ENCODE measurements at regions of chr7 and their contacts with region 1.

Region 1: DNA sequence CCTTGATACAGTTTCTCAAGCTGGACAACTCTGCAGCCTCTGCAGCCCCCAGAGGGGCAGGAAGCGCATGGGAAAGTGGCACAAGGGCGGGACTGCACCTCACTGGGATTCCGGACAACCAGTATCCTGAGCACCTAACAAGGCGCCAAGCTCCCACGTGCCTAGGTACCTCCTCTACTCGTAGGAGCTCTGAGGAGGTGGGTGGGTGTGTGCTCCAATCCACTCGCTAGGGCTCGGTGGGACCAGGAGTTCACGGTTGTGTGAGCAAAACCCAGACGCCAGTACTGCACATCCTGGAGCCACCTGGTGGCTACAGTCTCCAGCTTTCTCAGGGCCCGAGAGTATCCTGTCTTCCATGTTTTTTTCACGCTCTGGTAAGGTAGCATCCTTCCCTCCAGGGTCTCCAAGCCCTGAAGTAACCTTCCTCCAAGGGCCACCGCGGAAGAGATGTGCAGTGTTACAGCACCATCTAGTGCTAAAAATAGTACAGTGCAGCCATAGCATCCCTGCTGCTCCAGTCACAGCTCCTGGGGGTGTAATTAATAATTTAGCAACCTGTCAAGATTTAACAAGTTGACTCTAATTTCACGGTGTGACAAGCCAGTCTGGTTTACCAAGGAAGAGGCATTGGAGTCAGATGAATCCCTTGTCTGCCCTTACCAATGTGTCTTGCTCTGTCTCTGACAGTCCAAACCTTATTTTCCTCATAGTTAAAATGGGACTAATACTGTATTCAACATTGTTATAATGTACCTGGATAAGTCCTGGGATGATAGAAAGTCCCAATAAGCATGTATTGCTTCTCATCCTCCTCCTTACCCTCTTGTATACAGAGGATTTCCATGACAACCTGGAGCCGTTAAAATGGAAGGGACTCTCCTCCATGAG is 70.4 kb downstream of the HERPUD2 start:
- DNase-seq: peak; percentile 48
- ATAC-seq: peak; percentile 96
- H3K4me3 Mint-ChIP-seq: no peak overlapping the region
- H3K27ac Mint-ChIP-seq: no peak overlapping the region
- H3K4me1 Mint-ChIP-seq: peaks cover 2% of the 10 kb centered on the region
- H3K27me3 Mint-ChIP-seq: no peaks in the 10 kb centered on the region
- CTCF ChIP-seq: peak; percentile 91

Region 2: DNA sequence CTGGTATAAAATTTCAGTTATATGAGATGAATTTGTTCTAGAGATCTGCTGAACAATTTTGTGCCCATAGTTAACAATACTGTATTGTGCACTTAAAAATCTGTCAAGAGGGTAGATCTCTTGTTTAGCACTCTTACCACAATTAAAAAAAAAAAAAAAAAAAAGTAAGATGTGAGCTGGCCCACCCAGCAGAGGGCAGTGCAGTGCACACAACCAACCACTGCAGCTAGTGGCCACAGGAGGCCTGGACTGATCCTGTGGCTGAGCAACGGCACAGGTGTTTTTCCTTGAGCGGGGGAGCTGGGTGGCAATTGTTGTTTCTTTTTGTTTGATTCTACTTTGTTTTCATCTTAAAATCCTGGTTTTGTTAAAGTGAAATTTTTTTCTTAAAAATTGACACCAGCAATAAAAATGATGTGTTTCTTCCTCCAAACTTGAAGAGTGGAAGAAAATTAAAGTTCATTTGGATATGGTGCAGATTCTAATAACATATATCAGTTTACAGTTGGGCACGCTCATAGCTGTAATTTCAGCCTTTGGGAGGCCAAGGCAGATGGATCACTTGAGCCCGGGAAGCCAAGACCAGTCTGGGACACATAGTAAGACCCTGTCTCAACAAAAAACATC is 199.6 kb before region 1 on chr7:
- CTCF ChIA-PET with region 1: interaction called, 33 read pairs
- POLR2A ChIA-PET with region 1: no interaction called
- intact Hi-C with region 1: loop called (anchors 10 kb)
- DNase-seq: peak; percentile 71
- ATAC-seq: peak; percentile 87
- H3K4me3 Mint-ChIP-seq: no peak overlapping the region
- H3K27ac Mint-ChIP-seq: no peak overlapping the region
- H3K4me1 Mint-ChIP-seq: no peaks in the 10 kb centered on the region
- H3K27me3 Mint-ChIP-seq: peaks cover 20% of the 10 kb centered on the region
- CTCF ChIP-seq: peak; percentile 81

Region 3: GRCh38 chr7:35537067-35538023 is 87.2 kb before region 1 on chr7:
- CTCF ChIA-PET with region 1: interaction called, 9 read pairs
- POLR2A ChIA-PET with region 1: no interaction called
- intact Hi-C with region 1: loop called (anchors 5 kb)
- DNase-seq: peak; percentile 84
- ATAC-seq: peak; percentile 99
- H3K4me3 Mint-ChIP-seq: peak overlapping the region; percentile 70
- H3K27ac Mint-ChIP-seq: no peak overlapping the region
- H3K4me1 Mint-ChIP-seq: no peaks in the 10 kb centered on the region
- H3K27me3 Mint-ChIP-seq: peaks cover 2% of the 10 kb centered on the region
- CTCF ChIP-seq: peak; percentile 94

Region 4: GRCh38 chr7:35593896-35594295 is 30.6 kb before region 1 on chr7:
- CTCF ChIA-PET with region 1: interaction called, 10 read pairs
- POLR2A ChIA-PET with region 1: no interaction called
- intact Hi-C with region 1: no loop called
- DNase-seq: peak; percentile 46
- ATAC-seq: no peak
- H3K4me3 Mint-ChIP-seq: no peak overlapping the region
- H3K27ac Mint-ChIP-seq: no peak overlapping the region
- H3K4me1 Mint-ChIP-seq: peaks cover 3% of the 10 kb centered on the region
- H3K27me3 Mint-ChIP-seq: no peaks in the 10 kb centered on the region
- CTCF ChIP-seq: peak; percentile 44

Region 5: GRCh38 chr7:35613096-35613495 is 11.4 kb before region 1 on chr7:
- CTCF ChIA-PET with region 1: interaction called, 40 read pairs
- POLR2A ChIA-PET with region 1: no interaction called
- intact Hi-C with region 1: no loop called
- DNase-seq: no peak
- ATAC-seq: no peak
- H3K4me3 Mint-ChIP-seq: no peak overlapping the region
- H3K27ac Mint-ChIP-seq: no peak overlapping the region
- H3K4me1 Mint-ChIP-seq: no peaks in the 10 kb centered on the region
- H3K27me3 Mint-ChIP-seq: no peaks in the 10 kb centered on the region
- CTCF ChIP-seq: no peak

Region 6: DNA sequence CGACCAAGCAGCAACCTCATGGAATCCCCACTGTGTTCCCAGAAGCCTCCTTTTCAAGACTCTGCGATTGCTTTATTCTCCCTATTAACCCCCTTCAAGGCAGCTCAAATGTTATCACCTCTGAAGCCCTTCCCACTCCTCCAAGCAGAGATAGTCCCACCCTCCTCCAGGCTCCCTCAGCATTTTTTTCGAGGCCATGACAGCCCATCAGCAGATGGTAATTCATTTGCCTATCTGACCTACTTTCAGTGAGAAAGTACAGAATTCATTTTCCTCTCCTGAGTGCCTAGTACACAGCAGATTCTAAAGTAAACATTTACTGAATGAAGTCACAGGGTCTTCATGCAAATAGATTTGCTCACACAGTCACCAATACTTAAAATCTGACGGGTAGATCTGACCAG is 22.6 kb after region 1 on chr7:
- CTCF ChIA-PET with region 1: interaction called, 30 read pairs
- POLR2A ChIA-PET with region 1: no interaction called
- intact Hi-C with region 1: no loop called
- DNase-seq: no peak
- ATAC-seq: no peak
- H3K4me3 Mint-ChIP-seq: no peak overlapping the region
- H3K27ac Mint-ChIP-seq: peak overlapping the region; percentile 44
- H3K4me1 Mint-ChIP-seq: peaks cover 61% of the 10 kb centered on the region
- H3K27me3 Mint-ChIP-seq: no peaks in the 10 kb centered on the region
- CTCF ChIP-seq: no peak

Region 7: DNA sequence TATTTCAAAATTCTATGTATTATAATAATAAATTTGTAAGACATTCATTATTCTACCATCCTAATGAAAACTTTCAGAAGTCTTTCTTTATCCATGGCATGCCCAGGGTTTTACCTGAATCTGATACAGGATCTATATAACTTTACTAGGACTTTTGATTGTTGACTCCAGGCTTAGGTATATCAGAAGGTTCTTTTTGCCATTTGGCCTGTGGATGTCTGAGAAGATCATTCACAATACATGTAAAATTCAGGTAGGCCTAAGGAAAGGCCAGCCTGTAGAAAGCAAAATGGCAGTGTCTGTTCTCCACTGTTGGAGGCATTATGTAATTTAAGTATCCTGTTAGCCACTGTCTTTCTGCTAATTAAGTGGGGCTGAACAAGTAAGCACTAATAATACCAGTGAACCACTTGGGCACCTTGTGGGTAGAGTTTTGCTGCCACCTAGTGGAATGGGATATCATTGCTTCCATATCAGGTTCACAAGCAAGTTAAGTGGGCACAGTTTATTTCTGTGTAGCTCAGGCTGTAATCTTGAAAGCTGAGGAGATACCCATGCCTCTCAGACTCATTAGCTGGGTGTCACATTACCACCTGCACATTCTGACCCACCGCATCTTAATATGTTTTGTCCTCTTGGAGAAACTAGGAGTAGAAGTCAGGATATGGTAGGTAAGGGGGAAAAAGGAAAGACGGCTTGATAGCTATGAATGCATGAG is 281.8 kb after region 1 on chr7:
- CTCF ChIA-PET with region 1: interaction called, 15 read pairs
- POLR2A ChIA-PET with region 1: no interaction called
- intact Hi-C with region 1: no loop called
- DNase-seq: peak; percentile 75
- ATAC-seq: peak; percentile 87
- H3K4me3 Mint-ChIP-seq: no peak overlapping the region
- H3K27ac Mint-ChIP-seq: peak overlapping the region; percentile 49
- H3K4me1 Mint-ChIP-seq: peaks cover 9% of the 10 kb centered on the region
- H3K27me3 Mint-ChIP-seq: no peaks in the 10 kb centered on the region
- CTCF ChIP-seq: peak; percentile 92

Region 8: DNA sequence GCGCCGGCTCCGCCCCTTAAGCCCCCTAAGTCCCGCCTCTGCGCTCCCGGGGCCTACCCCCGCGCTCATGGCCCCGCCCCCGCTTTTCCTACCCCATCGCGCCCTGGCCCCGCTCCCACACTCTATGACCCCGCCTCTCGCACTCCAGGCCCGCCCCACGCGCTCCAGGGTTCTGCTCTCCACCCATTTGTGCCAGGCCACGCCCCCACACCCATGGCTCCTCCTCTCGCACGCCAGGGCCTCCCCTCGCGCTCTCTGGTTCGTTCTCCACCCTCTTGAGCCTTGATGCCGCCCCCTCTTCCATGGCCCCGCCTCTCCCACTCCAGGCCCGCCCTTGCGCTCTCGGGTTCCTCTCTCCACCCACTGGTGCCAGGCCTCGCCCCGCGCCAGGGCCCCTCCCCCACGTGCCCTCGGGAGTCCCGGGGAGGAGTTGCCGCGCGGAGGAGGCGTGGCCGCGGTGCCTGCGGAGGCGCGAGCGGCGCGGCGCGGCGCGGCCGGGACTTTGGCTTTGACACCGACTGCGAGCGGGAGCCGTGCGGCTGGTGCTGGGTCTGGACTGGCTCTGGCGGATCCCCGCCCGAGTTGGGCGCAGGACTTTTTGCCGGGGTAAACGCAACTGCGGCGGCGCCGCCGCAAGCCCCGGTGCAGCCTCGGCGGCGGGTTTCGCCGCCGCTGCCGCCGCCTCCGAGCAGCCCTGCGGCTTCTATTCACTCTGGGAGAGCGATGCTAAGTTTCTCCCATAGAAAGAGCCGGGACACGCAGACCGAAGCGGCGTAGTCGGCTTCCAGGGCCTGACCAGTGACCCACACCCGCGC is 528.4 kb after region 1 on chr7 and contains the start of gene EEPD1:
- CTCF ChIA-PET with region 1: no interaction called
- POLR2A ChIA-PET with region 1: no interaction called
- intact Hi-C with region 1: no loop called
- DNase-seq: peak; percentile 100
- ATAC-seq: peak; percentile 96
- H3K4me3 Mint-ChIP-seq: peak within 1 kb of the TSS; percentile 72
- H3K27ac Mint-ChIP-seq: peak within 1 kb of the TSS; percentile 8
- H3K4me1 Mint-ChIP-seq: peaks cover 8% of the 10 kb centered on the region
- H3K27me3 Mint-ChIP-seq: no peaks in the 10 kb centered on the region
- CTCF ChIP-seq: no peak
- total RNA-seq, gene EEPD1: 0.76 to 0.90 TPM

Measured in activated CD8-positive, alpha-beta T cell treated with anti-CD3 and anti-CD28 coated beads for 36 hours (primary cell).